Activated CD4-positive, alpha-beta T cell treated with anti-CD3 and anti-CD28 coated beads, Interleukin-2, amount 10 ng/mL, durations not matched to agents 24 days and 14 days (primary cell): ENCODE measurements at regions of chr12 and their contacts with region 1.

Region 1: DNA sequence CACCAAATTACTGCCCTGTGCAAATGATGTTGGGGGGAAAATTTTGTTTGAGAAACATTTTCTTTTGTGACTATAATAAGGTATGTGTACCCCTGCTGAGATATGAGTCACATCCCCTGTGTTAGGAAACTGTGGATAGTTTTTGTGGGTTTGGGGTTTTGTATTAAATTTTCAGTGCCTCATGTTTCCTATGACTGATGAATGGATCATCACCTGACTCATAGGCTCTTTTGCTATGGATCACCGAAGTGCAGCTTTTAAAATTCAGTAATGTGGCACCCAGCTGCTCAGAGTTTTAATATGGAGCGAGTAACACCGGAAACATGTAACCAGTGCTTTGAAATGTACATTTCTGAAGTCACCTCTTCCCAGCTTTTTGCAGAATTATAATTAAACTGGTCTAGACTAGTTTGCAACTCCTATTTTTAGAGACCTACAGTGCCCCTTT is 167.4 kb upstream of the HMGA2 start:
- DNase-seq: no peak
- H3K4me3 Mint-ChIP-seq: no peak overlapping the region
- H3K27ac Mint-ChIP-seq: peak overlapping the region; percentile 10
- H3K4me1 Mint-ChIP-seq: peaks cover 10% of the 10 kb centered on the region
- H3K27me3 Mint-ChIP-seq: peaks cover 7% of the 10 kb centered on the region

Region 2: DNA sequence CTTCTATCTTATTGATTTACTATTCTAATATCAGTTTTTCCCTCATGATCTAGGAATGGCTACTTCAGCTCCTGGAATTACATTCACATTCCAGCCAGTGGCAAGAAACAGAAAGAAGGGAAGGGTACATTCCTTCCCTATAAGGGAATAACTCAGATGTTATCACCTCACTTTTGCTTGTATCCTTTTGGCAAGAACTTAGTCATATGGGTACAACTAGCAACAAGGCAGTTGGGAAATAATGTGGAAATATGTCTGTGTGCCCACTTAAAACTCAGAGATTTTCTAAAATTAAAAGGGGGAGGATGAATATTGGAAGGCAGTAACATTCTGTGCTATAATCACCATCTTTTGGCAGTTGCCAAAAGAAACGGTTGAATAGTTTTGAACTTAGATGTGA is 292.9 kb before region 1 on chr12:
- intact Hi-C with region 1: no loop called
- DNase-seq: no peak
- H3K4me3 Mint-ChIP-seq: no peak overlapping the region
- H3K27ac Mint-ChIP-seq: no peak overlapping the region
- H3K4me1 Mint-ChIP-seq: no peaks in the 10 kb centered on the region
- H3K27me3 Mint-ChIP-seq: no peaks in the 10 kb centered on the region

Region 3: DNA sequence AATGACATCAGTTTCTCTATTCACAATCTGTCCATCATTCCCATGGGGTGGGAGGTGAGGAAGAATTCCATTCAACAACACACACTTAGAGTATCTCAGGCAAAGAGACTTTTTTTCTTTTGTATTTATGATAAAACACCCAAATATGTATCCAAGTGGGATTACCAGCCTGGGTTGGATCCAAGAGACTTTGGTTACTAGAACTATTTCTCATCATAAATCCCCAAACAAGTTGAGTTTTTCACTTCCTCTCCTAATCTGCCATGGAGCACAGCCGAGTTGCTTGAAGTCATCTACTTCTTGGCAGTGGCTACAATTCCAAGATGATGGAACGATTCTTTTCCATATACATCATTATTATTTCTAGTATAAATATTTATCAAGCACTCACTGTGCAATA is 41.8 kb before region 1 on chr12:
- intact Hi-C with region 1: loop called (anchors 5 kb)
- DNase-seq: no peak
- H3K4me3 Mint-ChIP-seq: no peak overlapping the region
- H3K27ac Mint-ChIP-seq: no peak overlapping the region
- H3K4me1 Mint-ChIP-seq: peaks cover 2% of the 10 kb centered on the region
- H3K27me3 Mint-ChIP-seq: no peaks in the 10 kb centered on the region

Region 4: DNA sequence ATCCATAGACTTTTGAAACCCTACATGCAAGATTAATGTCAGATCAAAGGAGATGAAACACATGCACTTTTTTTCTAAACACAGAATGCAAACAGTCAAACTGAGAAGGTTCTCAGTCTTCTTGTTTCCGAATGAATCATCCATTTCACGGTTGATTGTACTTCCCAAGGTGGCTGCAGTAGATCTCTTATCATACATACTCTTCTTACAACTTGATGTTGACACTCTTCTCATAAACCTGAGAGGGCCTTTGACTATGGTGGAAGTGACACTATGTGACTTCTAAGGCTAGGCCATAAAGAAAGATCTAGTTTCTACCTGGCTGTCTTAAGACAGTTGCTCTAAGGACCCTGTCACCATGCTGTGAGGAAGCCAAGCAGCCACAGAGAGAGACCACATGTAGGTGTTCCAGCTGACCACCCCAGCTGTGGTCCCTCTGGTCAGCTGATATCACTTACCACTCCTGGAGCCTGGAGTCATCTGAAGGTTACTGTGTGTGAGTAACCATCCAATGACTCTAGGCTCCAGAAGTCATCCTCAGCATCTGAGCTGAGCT is 100.1 kb after region 1 on chr12:
- intact Hi-C with region 1: loop called (anchors 2 kb)
- DNase-seq: peak; percentile 57
- H3K4me3 Mint-ChIP-seq: no peak overlapping the region
- H3K27ac Mint-ChIP-seq: peak overlapping the region; percentile 50
- H3K4me1 Mint-ChIP-seq: peaks cover 12% of the 10 kb centered on the region
- H3K27me3 Mint-ChIP-seq: peaks cover 28% of the 10 kb centered on the region